ENCODE measurements at regions of chr17 and their contacts with region 1.

Region 1: GRCh38 chr17:44775136-44775837 is 16.5 kb downstream of the ADAM11 start:
- DNase-seq: peak in 13 of 14 experiments; percentile 95 to 100 (median 98)
- ATAC-seq: peak; percentile 93
- H3K4me3 ChIP-seq: peak overlapping the region; percentile 74
- H3K4me3 Mint-ChIP-seq: peak overlapping the region; percentile 91
- H3K27ac ChIP-seq: no peak overlapping the region
- H3K27ac Mint-ChIP-seq: peak overlapping the region; percentile 78
- H3K4me1 ChIP-seq: peaks cover 35% of the 10 kb centered on the region
- H3K4me1 Mint-ChIP-seq: peaks cover 17% of the 10 kb centered on the region
- H3K27me3 ChIP-seq: peaks cover 0 to 9% of the 10 kb centered on the region in 2 experiments
- H3K27me3 Mint-ChIP-seq: peaks cover 14% of the 10 kb centered on the region
- CTCF ChIP-seq: peak; percentile 60

Region 2: GRCh38 chr17:44899069-44899782 is 123.9 kb after region 1 on chr17 and contains the start of gene EFTUD2:
- CTCF ChIA-PET with region 1: interaction called, 3 read pairs
- POLR2A ChIA-PET with region 1: interaction called, 8 read pairs
- intact Hi-C with region 1: loop called in 1 of 2 experiments (anchors 1 kb)
- DNase-seq: peak; percentile 87 to 96 (median 91)
- ATAC-seq: peak; percentile 95
- H3K4me3 ChIP-seq: peak within 1 kb of the TSS; percentile 82
- H3K4me3 Mint-ChIP-seq: peak within 1 kb of the TSS; percentile 95
- H3K27ac ChIP-seq: peak within 1 kb of the TSS; percentile 98 to 99
- H3K27ac Mint-ChIP-seq: peak within 1 kb of the TSS; percentile 99
- H3K4me1 ChIP-seq: peaks cover 29% of the 10 kb centered on the region
- H3K4me1 Mint-ChIP-seq: peaks cover 37% of the 10 kb centered on the region
- H3K27me3 ChIP-seq: no peaks in the 10 kb centered on the region
- H3K27me3 Mint-ChIP-seq: peaks cover 10% of the 10 kb centered on the region
- CTCF ChIP-seq: no peak
- total RNA-seq, gene EFTUD2: 105 to 112 TPM

Region 3: DNA sequence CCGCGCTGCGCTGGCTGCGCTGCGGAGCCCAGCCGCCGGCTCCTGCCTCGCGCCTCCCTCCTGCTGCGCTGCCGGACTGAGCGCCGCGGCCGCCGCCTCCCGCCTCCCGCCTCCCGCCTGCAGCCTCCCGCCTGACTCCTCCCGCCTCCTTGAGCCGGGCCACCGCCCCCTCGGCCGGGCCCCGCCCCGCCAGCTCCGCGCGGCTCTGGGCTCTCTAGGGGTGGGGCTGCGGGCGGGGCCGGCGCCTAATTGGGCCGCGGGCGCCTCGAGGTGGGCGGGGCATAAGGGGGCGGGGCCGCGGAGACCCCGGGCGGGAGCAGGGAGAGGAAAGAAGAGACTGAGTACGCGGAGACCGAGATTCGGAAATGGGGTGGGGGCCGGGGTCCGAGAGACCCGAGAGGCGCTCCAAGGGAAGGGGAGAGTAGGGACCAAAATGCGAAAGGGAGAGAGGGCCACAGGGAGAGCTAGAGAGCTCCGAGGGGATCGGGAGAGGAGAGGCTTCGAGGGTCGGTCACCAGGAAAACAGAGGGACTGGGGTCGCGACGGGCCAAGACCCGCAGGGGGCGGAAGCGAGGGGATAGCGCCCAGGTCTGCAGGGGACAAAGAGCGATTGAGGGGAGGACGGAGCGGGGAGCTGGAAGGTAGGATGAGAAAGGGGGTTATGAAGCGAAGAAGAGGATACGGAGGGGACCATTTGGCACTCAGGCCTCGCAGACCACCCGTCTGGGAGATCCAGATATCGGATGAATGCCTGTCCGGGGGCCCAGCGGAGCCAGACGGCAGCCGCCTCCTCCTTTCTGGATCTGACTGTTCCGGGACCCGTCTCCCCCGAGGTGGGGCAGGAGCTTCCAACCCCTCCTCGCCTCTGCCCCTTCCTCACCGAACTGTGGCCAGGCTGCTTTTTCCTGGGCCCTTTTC is 193.2 kb after region 1 on chr17 and contains the start of gene C1QL1:
- CTCF ChIA-PET with region 1: no interaction called
- POLR2A ChIA-PET with region 1: no interaction called
- intact Hi-C with region 1: loop called in 1 of 2 experiments (anchors 5 kb)
- DNase-seq: peak; percentile 64 to 93 (median 85)
- ATAC-seq: peak; percentile 92
- H3K4me3 ChIP-seq: peak within 1 kb of the TSS; percentile 54
- H3K4me3 Mint-ChIP-seq: peak within 1 kb of the TSS; percentile 83
- H3K27ac ChIP-seq: no peak within 1 kb of the TSS
- H3K27ac Mint-ChIP-seq: no peak within 1 kb of the TSS
- H3K4me1 ChIP-seq: peaks cover 42% of the 10 kb centered on the region
- H3K4me1 Mint-ChIP-seq: peaks cover 32% of the 10 kb centered on the region
- H3K27me3 ChIP-seq: peaks cover 42 to 54% of the 10 kb centered on the region in 2 experiments
- H3K27me3 Mint-ChIP-seq: peaks cover 63% of the 10 kb centered on the region
- CTCF ChIP-seq: peak; percentile 28
- total RNA-seq, gene C1QL1: not detected

Region 4: DNA sequence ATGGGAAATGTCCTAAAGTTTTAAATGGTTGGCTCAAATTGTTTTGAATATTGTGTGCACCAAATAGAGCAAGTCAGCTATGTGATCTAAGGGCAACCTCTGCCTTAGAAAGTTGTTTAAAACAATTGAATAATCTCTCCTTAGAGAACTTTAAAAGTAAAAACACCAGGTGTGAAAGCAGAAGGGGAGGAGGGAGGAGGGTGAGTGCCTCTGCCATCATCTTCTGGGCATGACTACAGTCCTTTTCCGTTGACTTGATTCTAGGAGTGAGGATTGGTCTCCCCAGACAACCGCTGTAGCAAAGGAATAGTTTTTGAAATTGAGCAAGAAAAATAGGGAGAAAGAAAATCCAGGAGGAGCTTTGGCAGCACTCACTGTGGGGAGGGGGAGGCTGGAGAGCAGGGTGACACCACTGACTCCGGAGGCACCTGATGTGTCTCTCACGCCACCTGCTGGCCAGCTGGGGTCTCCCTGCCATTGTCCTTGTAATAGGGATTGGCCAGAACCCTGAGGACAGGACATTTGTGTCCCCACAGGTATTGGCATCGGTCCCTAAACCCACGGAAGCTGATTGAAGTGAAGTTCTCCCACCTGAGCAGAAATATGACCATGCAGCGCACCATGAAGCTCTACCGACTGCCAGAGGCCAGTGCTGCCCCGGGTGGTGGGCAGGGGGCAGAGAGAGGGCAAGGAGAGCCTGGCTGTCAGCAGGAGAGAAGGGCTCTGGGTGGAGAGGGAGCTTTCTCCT is 323.8 kb after region 1 on chr17:
- CTCF ChIA-PET with region 1: interaction called, 5 read pairs
- POLR2A ChIA-PET with region 1: no interaction called
- intact Hi-C with region 1: loop called (anchors 1 to 2 kb)
- DNase-seq: peak; percentile 61 to 86 (median 72)
- ATAC-seq: peak; percentile 90
- H3K4me3 ChIP-seq: no peak overlapping the region
- H3K4me3 Mint-ChIP-seq: no peak overlapping the region
- H3K27ac ChIP-seq: no peak overlapping the region
- H3K27ac Mint-ChIP-seq: no peak overlapping the region
- H3K4me1 ChIP-seq: no peaks in the 10 kb centered on the region
- H3K4me1 Mint-ChIP-seq: peaks cover 7% of the 10 kb centered on the region
- H3K27me3 ChIP-seq: no peaks in the 10 kb centered on the region
- H3K27me3 Mint-ChIP-seq: no peaks in the 10 kb centered on the region
- CTCF ChIP-seq: peak; percentile 91